A549 (cell line): ENCODE measurements at regions of chr10 and their contacts with region 1.

Region 1: DNA sequence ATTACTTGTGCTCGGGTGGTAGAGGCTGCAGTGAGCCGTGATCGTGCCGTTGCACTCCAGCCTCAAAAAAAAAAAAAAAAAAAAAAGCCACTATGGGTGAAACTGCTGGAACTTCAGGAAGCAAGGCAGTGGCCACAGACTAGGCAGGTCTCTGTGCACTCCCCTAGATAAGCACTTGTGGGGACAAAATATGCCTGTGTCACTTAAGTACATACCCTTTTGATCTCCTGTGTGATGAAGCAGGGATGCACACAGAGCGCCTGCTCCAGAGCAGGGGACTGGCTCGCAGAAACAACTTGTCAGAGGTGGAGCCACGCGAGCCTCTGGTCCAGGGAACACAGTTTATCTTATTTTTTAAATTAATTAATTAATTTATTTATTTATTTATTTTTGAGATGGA is 42.9 kb upstream of the PSAP start:
- DNase-seq: no peak
- ATAC-seq: no peak
- H3K4me3 ChIP-seq: no peak overlapping the region
- H3K27ac ChIP-seq: no peak overlapping the region
- H3K4me1 ChIP-seq: peaks cover 17% of the 10 kb centered on the region
- CTCF ChIP-seq: no peak
- EP300 ChIP-seq: no peak
- POLR2A ChIP-seq: no peak
- RAD21 ChIP-seq: no peak

Region 2: GRCh38 chr10:71314028-71314693 is 579.8 kb before region 1 on chr10:
- CTCF ChIA-PET with region 1: interaction called, 27 read pairs
- POLR2A ChIA-PET with region 1: no interaction called
- DNase-seq: peak; percentile 55 to 70
- ATAC-seq: peak; percentile 52 to 77; a peak in 3 of 6 replicates
- H3K4me3 ChIP-seq: no peak overlapping the region
- H3K27ac ChIP-seq: peak overlapping the region; percentile 39 to 77; a peak in 5 of 6 replicates
- H3K4me1 ChIP-seq: 0 out of 3 replicates have a peak, but pooled peaks cover 3% of the 10 kb centered on the region
- CTCF ChIP-seq: peak; percentile 93
- EP300 ChIP-seq: no peak
- POLR2A ChIP-seq: no peak
- RAD21 ChIP-seq: peak; percentile 87 to 98

Region 3: GRCh38 chr10:71822448-71822763 is 71.5 kb before region 1 on chr10:
- CTCF ChIA-PET with region 1: interaction called, 101 read pairs
- POLR2A ChIA-PET with region 1: interaction called, 5 read pairs
- DNase-seq: no peak
- ATAC-seq: no peak
- H3K4me3 ChIP-seq: no peak overlapping the region
- H3K27ac ChIP-seq: no peak overlapping the region
- H3K4me1 ChIP-seq: no peaks in the 10 kb centered on the region
- CTCF ChIP-seq: no peak
- EP300 ChIP-seq: no peak
- POLR2A ChIP-seq: no peak
- RAD21 ChIP-seq: no peak

Region 4: DNA sequence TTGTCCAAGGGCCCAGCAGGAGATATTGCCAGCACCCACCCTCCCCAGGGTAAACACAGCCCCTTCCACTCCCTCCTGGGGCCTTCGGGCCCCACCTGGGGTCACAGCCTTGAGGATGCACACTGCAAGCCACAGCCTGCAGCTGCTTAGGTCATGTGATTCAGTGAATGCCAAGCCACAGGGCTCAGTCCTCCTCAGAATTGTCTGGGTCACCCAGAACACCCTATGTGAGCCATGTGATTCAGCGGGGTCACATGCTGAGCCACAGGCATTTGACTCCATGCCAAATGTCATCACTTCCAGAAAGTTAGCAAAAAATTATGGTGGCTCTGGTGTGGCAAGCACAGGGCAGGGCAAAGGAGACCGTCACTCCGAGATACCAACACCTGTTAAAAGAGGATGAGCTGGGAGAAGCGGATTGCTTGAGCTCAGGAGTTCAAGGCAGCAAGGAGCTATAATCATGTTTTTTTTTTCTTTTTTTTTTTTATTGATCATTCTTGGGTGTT is 25.7 kb before region 1 on chr10:
- CTCF ChIA-PET with region 1: interaction called, 60 read pairs
- POLR2A ChIA-PET with region 1: interaction called, 7 read pairs
- DNase-seq: peak; percentile 57 to 80
- ATAC-seq: peak; percentile 57 to 88
- H3K4me3 ChIP-seq: no peak overlapping the region
- H3K27ac ChIP-seq: peak overlapping the region; percentile 91 to 93
- H3K4me1 ChIP-seq: peaks cover 67% of the 10 kb centered on the region
- CTCF ChIP-seq: no peak
- EP300 ChIP-seq: peak; percentile 65 to 77; a peak in 3 of 5 replicates
- POLR2A ChIP-seq: no peak
- RAD21 ChIP-seq: no peak; a peak in 1 of 5 replicates

Region 5: GRCh38 chr10:71957546-71958275 is 63.8 kb after region 1 on chr10:
- CTCF ChIA-PET with region 1: interaction called, 52 read pairs
- POLR2A ChIA-PET with region 1: no interaction called
- DNase-seq: peak in 1 of 2 experiments; percentile 47
- ATAC-seq: peak in 1 of 2 experiments; percentile 52; a peak in 3 of 6 replicates
- H3K4me3 ChIP-seq: no peak overlapping the region
- H3K27ac ChIP-seq: peak overlapping the region; percentile 72 to 84; a peak in 5 of 6 replicates
- H3K4me1 ChIP-seq: peaks cover 23% of the 10 kb centered on the region
- CTCF ChIP-seq: peak; percentile 23; the same call in 2 of the 3 replicates
- EP300 ChIP-seq: no peak
- POLR2A ChIP-seq: no peak
- RAD21 ChIP-seq: no peak

Region 6: DNA sequence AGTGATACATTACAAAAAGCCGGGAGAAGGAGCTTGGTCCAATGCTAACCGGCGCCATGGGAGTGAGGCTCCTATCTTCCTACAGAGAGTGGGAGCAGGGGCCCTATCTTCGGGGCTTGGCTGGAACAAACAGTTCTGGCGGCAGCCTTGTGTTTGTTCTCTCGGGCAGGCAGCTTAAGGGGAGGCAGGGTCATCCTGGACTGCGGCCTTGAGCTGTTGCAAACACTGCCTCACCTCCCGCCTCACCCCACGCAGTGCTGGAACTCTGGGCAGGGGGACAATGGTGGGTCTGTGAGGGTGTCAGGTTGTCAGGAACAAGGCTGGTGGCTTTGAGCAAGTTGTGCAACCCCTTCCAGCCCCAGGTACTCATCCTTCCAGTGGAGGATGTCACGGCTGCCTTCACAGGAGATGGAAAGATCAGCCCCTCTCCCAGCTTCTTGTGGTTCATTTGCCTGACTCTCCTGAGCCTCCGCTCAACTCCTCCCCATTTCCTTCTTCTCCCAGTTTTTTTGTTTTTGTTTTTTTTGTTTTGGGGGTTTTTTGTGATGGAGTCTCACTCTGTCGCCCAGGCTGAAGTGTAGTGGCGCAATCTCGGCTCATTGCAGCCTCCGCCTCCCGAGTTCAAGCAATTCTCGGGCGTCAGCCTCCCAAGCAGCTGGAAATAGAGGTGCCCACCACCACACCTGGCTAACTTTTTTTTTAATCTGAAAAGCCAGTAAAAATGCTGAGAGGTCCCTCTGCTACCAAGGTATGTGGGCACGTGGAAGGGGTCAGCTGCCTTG is 137.0 kb after region 1 on chr10:
- CTCF ChIA-PET with region 1: interaction called, 12 read pairs
- POLR2A ChIA-PET with region 1: no interaction called
- DNase-seq: no peak
- ATAC-seq: no peak; a peak in 1 of 6 replicates
- H3K4me3 ChIP-seq: no peak overlapping the region
- H3K27ac ChIP-seq: peak overlapping the region in 1 of 2 experiments; percentile 3; a peak in 2 of 6 replicates
- H3K4me1 ChIP-seq: peaks cover 24% of the 10 kb centered on the region
- CTCF ChIP-seq: no peak
- EP300 ChIP-seq: no peak
- POLR2A ChIP-seq: no peak
- RAD21 ChIP-seq: no peak

Region 7: GRCh38 chr10:72086466-72087391 is 192.8 kb after region 1 on chr10:
- CTCF ChIA-PET with region 1: no interaction called
- POLR2A ChIA-PET with region 1: no interaction called
- DNase-seq: no peak
- ATAC-seq: no peak
- H3K4me3 ChIP-seq: no peak overlapping the region
- H3K27ac ChIP-seq: no peak overlapping the region
- H3K4me1 ChIP-seq: peaks cover 6% of the 10 kb centered on the region; the same call in 1 of the 3 replicates
- CTCF ChIP-seq: no peak
- EP300 ChIP-seq: no peak
- POLR2A ChIP-seq: no peak
- RAD21 ChIP-seq: no peak